Activated CD4-positive, alpha-beta T cell treated with anti-CD3 and anti-CD28 coated beads for 36 hours (primary cell): ENCODE measurements at regions of chr10 and their contacts with region 1.

Region 1: GRCh38 chr10:75165684-75166622 is 44.6 kb upstream of the VDAC2 start:
- DNase-seq: peak; percentile 24
- ATAC-seq: peak; percentile 88
- H3K4me3 Mint-ChIP-seq: no peak overlapping the region
- H3K27ac Mint-ChIP-seq: peak overlapping the region; percentile 89
- H3K4me1 Mint-ChIP-seq: peaks cover 31% of the 10 kb centered on the region
- H3K27me3 Mint-ChIP-seq: no peaks in the 10 kb centered on the region

Region 2: DNA sequence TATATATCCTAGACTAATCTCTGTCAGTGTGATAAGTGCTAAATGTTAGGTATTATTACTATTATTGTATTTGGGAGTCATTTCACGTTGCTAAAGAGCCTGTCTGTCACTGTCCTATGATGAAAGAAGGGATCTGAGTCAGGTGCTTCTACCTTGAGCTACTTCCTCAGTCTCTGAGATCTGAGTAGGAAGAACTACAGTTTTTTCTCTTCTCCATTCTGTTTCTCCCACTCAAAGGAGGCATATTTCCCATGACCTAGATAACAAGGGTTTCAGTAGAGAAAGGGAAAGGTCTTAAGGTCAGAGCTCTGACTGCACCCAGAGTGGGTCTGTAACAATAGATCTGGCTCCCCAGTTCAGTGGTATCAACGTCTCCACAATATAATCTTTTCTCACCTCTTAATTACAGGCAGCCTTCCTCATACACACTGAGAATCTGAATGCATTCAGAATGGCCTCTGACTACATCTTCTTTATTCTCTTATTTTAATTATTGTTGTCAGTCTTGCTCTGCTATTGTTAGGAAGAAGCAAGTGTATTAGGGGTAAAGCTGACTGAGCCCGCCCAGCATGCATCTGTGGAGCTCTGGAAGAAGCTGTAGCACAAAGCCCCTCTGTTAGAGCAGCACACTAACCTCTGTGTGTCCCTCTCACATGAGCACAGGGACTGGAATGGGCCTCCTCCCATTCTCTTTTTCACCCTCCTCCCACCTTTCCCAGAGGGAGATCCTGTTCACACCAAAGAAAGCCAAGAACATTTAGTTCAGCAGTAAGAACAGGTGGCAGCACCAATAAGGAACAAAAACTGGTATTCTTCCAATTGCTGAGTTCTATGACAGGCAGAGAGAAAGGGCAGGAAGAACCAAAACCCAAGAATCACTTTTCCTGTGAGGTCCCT is 1612.9 kb before region 1 on chr10:
- CTCF ChIA-PET with region 1: no interaction called
- POLR2A ChIA-PET with region 1: no interaction called
- intact Hi-C with region 1: no loop called
- DNase-seq: no peak
- ATAC-seq: no peak
- H3K4me3 Mint-ChIP-seq: no peak overlapping the region
- H3K27ac Mint-ChIP-seq: no peak overlapping the region
- H3K4me1 Mint-ChIP-seq: no peaks in the 10 kb centered on the region
- H3K27me3 Mint-ChIP-seq: no peaks in the 10 kb centered on the region

Region 3: DNA sequence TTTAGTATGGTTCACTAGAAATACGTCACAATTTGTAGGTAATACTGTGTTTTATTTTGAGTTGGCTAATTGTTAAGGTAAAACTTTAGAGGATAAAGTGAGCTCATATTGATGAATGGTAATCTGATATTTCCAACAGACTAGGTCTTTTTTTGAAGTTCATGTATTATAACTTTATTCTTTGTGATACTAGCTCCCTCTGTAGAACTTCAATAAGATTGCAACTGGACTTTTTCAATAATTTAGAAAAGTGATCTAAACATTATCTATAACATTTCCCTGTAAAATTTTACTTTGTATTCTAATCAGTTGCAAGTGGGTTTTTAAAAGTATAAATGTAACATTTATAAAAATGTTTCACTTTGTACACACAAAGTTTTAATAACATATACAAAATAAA is 931.4 kb before region 1 on chr10:
- CTCF ChIA-PET with region 1: no interaction called
- POLR2A ChIA-PET with region 1: no interaction called
- intact Hi-C with region 1: no loop called
- DNase-seq: no peak
- ATAC-seq: no peak
- H3K4me3 Mint-ChIP-seq: no peak overlapping the region
- H3K27ac Mint-ChIP-seq: no peak overlapping the region
- H3K4me1 Mint-ChIP-seq: no peaks in the 10 kb centered on the region
- H3K27me3 Mint-ChIP-seq: no peaks in the 10 kb centered on the region

Region 4: DNA sequence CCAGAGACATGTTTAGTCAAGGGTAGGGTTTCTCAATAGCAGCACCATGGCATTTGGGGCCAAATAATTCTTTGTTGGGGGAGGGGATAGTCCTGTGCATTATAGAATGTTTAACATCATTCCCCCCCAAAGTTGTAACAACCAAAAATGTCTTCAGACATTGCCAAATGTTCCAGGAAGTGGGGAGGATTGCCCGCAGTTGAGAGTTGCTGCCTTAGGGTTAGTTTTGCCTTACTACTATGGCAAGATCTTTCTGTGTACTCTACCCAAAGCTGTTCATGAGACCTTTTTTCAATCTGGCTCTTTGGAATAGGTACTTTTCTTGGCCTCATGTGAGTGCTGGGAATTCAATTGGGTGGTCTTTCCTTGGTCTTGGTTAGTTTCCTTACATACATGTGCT is 20.4 kb before region 1 on chr10:
- CTCF ChIA-PET with region 1: interaction called, 3 read pairs
- POLR2A ChIA-PET with region 1: no interaction called
- intact Hi-C with region 1: loop called in 1 of 2 experiments (anchors 2 kb)
- DNase-seq: no peak
- ATAC-seq: no peak
- H3K4me3 Mint-ChIP-seq: no peak overlapping the region
- H3K27ac Mint-ChIP-seq: peak overlapping the region; percentile 13
- H3K4me1 Mint-ChIP-seq: peaks cover 32% of the 10 kb centered on the region
- H3K27me3 Mint-ChIP-seq: no peaks in the 10 kb centered on the region

Region 5: GRCh38 chr10:75261813-75262708 is 96.1 kb after region 1 on chr10:
- CTCF ChIA-PET with region 1: no interaction called
- POLR2A ChIA-PET with region 1: no interaction called
- intact Hi-C with region 1: no loop called
- DNase-seq: no peak
- ATAC-seq: no peak
- H3K4me3 Mint-ChIP-seq: no peak overlapping the region
- H3K27ac Mint-ChIP-seq: no peak overlapping the region
- H3K4me1 Mint-ChIP-seq: no peaks in the 10 kb centered on the region
- H3K27me3 Mint-ChIP-seq: no peaks in the 10 kb centered on the region

Region 6: GRCh38 chr10:75772153-75772887 is 606.4 kb after region 1 on chr10:
- CTCF ChIA-PET with region 1: no interaction called
- POLR2A ChIA-PET with region 1: no interaction called
- intact Hi-C with region 1: no loop called
- DNase-seq: no peak
- ATAC-seq: no peak
- H3K4me3 Mint-ChIP-seq: peak overlapping the region; percentile 52
- H3K27ac Mint-ChIP-seq: no peak overlapping the region
- H3K4me1 Mint-ChIP-seq: peaks cover 18% of the 10 kb centered on the region
- H3K27me3 Mint-ChIP-seq: peaks cover 3% of the 10 kb centered on the region